AG04449 (cell line): ENCODE measurements at regions of chr10 and their contacts with region 1.

Region 1: GRCh38 chr10:58475322-58476277 is 37.1 kb upstream of the BICC1 start:
- DNase-seq: no peak
- H3K4me3 ChIP-seq: peak overlapping the region; percentile 47
- CTCF ChIP-seq: no peak

Region 2: GRCh38 chr10:58435297-58435985 is 40.2 kb before region 1 on chr10:
- CTCF ChIA-PET with region 1: interaction called, 3 read pairs
- POLR2A ChIA-PET with region 1: interaction called, 10 read pairs
- DNase-seq: peak; percentile 96
- H3K4me3 ChIP-seq: no peak overlapping the region
- CTCF ChIP-seq: no peak

Region 3: GRCh38 chr10:58555170-58555929 is 79.8 kb after region 1 on chr10:
- CTCF ChIA-PET with region 1: no interaction called
- POLR2A ChIA-PET with region 1: no interaction called
- DNase-seq: no peak
- H3K4me3 ChIP-seq: no peak overlapping the region
- CTCF ChIP-seq: no peak